Ascending aorta (tissue), 2 donors: ENCODE measurements at regions of chr19 and their contacts with region 1.

Region 1: GRCh38 chr19:47075179-47075810 is 26.9 kb upstream of the TMEM160 start:
- DNase-seq: no peak
- H3K4me3 ChIP-seq: no peak overlapping the region
- H3K27ac ChIP-seq: no peak overlapping the region
- H3K4me1 ChIP-seq: peaks cover 3% of the 10 kb centered on the region in 2 donors
- H3K27me3 ChIP-seq: no peaks in the 10 kb centered on the region
- CTCF ChIP-seq: no peak

Region 2: DNA sequence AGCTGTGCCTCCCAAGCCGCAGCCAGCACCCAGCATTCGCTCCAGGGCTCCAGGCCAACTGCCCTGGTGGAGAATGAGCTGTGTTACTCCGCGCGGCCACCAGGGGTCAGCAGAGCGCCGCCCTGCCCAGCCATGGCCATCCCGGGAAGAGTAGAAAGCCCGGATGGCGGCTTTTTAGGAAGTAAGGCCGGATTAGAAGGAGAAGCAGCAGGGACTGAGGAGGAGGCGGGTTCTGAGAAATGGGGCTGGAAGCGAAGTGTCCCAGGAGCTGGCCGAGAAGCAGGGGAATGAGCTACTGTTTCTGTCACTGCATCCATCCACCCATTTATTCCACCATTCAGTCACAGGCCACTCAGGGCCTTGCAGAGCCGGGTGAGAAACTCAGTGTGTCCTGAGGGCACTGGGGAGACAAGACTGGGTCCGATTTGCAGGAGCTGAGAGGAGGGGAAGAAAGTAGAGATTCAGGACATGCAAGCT is 62.2 kb before region 1 on chr19:
- intact Hi-C with region 1: loop called (anchors 10 kb)
- DNase-seq: peak in 1 of 2 donors; percentile 84
- H3K4me3 ChIP-seq: no peak overlapping the region
- H3K27ac ChIP-seq: no peak overlapping the region
- H3K4me1 ChIP-seq: peaks cover 0 to 3% of the 10 kb centered on the region in 2 donors
- H3K27me3 ChIP-seq: no peaks in the 10 kb centered on the region
- CTCF ChIP-seq: peak; percentile 96 to 100 (median 99)

Region 3: DNA sequence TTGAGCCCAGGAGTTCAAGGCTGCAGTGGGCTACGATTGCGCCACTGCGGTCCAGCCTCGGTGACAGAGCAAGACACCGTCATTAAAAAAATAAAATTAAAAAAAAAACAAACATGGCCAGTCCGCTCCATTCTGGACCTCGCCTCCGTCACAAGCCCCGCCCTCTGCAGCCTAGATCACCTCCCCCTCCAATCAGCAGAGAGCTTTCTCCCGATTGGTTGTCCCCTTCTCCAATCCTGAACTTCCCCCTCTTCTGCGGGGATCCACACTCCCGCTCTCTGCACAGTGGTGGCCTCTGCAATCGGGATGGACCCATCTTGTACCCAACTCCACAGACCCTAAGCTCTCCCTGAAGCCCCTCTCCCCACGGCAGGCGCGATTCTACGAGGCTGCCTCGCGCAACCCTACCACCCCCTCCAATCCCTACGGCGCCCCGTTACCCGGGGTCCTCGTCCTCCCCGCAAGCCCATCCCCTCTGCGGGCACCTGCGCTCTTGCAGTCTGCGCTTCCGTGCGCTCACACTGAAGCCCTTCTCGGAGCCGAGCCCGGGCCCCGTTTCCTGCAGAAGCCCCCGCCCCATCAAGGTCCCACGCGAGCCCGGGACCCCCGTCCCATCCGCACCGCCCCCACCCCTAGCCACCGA is 27.4 kb before region 1 on chr19:
- intact Hi-C with region 1: no loop called
- DNase-seq: peak; percentile 58 to 89
- H3K4me3 ChIP-seq: peak overlapping the region; percentile 77 to 83
- H3K27ac ChIP-seq: peak overlapping the region; percentile 80
- H3K4me1 ChIP-seq: peaks cover 0 to 4% of the 10 kb centered on the region in 2 donors
- H3K27me3 ChIP-seq: no peaks in the 10 kb centered on the region
- CTCF ChIP-seq: no peak

Region 4: GRCh38 chr19:47124937-47125668 is 49.8 kb after region 1 on chr19:
- intact Hi-C with region 1: loop called (anchors 1 kb)
- DNase-seq: no peak
- H3K4me3 ChIP-seq: no peak overlapping the region
- H3K27ac ChIP-seq: no peak overlapping the region
- H3K4me1 ChIP-seq: peaks cover 0 to 8% of the 10 kb centered on the region in 2 donors
- H3K27me3 ChIP-seq: no peaks in the 10 kb centered on the region
- CTCF ChIP-seq: peak; percentile 69 to 79 (median 79)